Gastrocnemius medialis (tissue), 4 donors: ENCODE measurements at regions of chr11 and their contacts with region 1.

Region 1: GRCh38 chr11:129750349-129751292 is 65.0 kb upstream of the TMEM45B start:
- DNase-seq: peak; percentile 25 to 37
- ATAC-seq: peak; percentile 74 to 82
- H3K4me3 ChIP-seq: peak overlapping the region in 2 of 4 donors; percentile 13 to 27
- H3K27ac ChIP-seq: no peak overlapping the region
- H3K4me1 ChIP-seq: no peaks in the 10 kb centered on the region
- H3K27me3 ChIP-seq: no peaks in the 10 kb centered on the region
- CTCF ChIP-seq: peak; percentile 87 to 98 (median 94)
- POLR2A ChIP-seq: no peak

Region 2: DNA sequence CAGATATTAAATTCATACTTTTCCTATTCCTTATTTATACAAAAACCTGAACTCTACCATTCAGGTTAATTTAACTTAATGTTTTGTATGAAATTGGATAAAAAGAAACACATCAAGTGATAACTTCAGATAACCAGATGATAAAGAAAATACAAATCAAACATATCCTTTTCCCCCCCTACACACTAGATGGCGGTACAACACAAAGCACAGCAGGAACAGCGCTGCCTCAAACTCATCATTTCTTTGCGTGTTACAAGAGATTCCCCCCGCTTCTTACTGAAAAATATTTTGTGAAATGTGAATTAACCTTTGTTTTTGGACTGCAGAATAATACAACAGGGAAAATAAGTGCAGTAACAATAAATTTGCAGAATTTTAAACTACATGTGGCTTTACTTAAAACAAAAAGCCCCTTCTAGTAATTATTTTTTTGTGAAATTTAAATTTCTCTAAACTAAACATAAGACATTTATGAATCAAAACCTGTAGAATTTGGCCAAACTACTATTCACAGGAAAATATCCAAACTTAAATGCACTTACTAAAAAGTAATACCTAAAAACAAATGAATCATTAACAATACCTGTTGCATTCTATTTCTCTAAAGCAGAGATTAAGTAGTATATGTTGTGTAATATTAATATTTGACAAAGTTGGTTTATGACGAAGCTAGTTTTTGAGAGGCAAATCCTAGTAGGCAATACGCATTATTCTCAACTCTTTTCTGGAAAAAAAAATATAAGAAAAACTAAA is 632.8 kb before region 1 on chr11:
- in situ Hi-C with region 1: loop called in 1 of 4 experiments (anchors 25 kb)
- intact Hi-C with region 1: loop called (anchors 2 kb)
- DNase-seq: no peak
- ATAC-seq: peak in 1 of 2 donors; percentile 66
- H3K4me3 ChIP-seq: no peak overlapping the region
- H3K27ac ChIP-seq: no peak overlapping the region
- H3K4me1 ChIP-seq: no peaks in the 10 kb centered on the region
- H3K27me3 ChIP-seq: no peaks in the 10 kb centered on the region
- CTCF ChIP-seq: peak; percentile 65 to 87 (median 81)
- POLR2A ChIP-seq: no peak

Region 3: DNA sequence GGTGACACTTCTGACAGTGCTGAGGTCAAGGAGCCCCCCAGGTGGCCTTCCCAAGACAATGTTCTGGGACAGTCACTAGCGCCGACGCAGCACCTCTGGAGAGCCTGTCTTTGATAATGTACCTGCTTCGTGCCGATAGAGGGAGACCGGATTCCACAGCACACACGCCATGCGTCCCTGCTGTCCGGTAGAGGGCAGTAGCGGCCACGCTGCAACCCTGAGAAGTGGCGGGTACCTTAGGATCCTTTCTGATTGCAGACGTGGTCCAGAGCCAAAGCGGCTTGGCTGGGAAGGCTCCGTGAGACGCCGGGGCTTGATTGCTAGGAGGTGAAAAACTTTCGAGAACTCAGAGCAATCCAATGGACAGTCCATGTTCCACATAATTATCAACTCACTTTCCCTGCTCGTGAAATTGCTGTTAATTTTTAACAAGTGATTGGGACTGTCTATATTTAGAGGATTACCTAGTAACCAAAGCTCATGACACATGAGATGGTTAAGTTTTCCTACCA is 386.4 kb before region 1 on chr11:
- in situ Hi-C with region 1: loop called (anchors 10 to 25 kb)
- intact Hi-C with region 1: no loop called
- DNase-seq: peak; percentile 35 to 52
- ATAC-seq: peak in 1 of 2 donors; percentile 86
- H3K4me3 ChIP-seq: peak overlapping the region in 1 of 4 donors; percentile 2
- H3K27ac ChIP-seq: no peak overlapping the region
- H3K4me1 ChIP-seq: no peaks in the 10 kb centered on the region
- H3K27me3 ChIP-seq: peaks cover 25 to 37% (median 34%) of the 10 kb centered on the region in 3 donors
- CTCF ChIP-seq: peak; percentile 46 to 86 (median 66)
- POLR2A ChIP-seq: no peak

Region 4: DNA sequence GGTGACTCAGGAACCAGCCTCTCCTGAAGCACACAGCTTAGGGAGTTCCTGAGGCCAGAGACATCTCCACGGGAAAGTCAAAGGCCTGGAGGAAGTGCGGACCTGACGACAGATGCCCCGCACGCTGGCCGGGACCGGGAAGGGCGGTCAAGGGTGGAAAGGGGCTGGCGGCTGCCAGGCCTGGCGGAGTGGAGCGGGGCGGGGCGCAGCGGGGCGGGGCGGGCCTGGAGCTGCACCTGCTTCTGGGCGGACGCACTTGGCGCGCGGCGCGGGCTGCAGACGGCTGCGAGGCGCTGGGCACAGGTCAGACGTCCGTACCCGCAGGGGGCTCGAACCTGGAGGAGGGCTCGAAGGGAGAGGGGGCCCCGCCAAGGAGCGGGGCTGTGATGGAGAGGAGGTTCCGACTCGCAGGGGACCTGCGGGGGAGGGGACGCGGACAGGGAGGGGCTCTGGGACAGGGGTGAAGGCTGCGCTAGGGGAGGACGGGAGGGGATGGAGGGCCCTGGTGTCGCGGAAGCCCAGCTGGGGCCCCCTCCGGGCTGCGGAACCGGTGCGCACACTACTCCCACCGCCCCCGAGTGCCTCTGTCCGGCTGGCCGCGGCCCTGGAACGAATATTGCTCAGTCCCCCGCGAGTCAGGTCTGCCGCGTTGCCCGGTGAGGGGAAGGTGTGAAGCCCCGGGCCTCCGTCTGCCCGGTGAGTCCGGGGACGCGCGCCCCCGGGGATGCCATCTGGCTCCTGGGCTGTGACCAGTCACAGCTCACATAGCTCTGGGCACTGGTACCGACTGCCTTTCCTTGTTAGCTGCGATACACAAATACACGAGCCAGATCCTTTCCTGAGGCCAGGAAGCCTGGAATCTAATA is 65.2 kb after region 1 on chr11 and contains the start of gene TMEM45B:
- in situ Hi-C with region 1: no loop called
- intact Hi-C with region 1: no loop called
- DNase-seq: no peak
- ATAC-seq: no peak
- H3K4me3 ChIP-seq: no peak within 1 kb of the TSS
- H3K27ac ChIP-seq: no peak within 1 kb of the TSS
- H3K4me1 ChIP-seq: no peaks in the 10 kb centered on the region
- H3K27me3 ChIP-seq: peaks cover 8 to 28% (median 10%) of the 10 kb centered on the region in 3 donors
- CTCF ChIP-seq: no peak
- POLR2A ChIP-seq: no peak
- total RNA-seq, gene TMEM45B: 1.0 TPM in 1 of 4 donors, not detected in the others

Region 5: DNA sequence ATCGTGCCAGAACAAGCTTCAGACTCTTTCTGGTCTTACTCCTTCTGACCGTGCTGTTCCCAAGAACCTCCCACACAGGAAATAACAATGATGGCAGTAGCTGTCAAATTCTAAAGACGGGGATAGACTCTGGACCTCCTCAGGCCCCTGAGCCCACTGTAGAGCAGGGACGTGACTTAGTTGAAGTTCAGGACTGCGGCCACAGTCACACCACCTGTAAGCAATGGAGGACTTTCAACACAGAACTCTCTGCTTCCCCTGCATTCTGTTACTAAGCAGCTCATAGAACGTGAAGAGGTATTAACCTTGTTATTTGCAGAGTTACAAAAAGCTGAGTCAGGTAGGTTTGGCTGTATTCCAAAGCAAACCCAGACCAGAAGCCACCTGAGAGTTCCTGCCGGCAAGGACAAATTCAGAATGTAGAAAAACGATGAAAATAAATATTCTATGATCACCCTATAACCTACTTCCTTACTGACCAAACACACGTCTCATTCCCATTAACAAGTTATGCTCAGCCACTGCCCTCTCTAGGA is 77.7 kb after region 1 on chr11:
- in situ Hi-C with region 1: no loop called
- intact Hi-C with region 1: no loop called
- DNase-seq: no peak
- ATAC-seq: no peak
- H3K4me3 ChIP-seq: no peak overlapping the region
- H3K27ac ChIP-seq: no peak overlapping the region
- H3K4me1 ChIP-seq: no peaks in the 10 kb centered on the region
- H3K27me3 ChIP-seq: no peaks in the 10 kb centered on the region
- CTCF ChIP-seq: no peak
- POLR2A ChIP-seq: no peak